ENCODE measurements at regions of chr19 and their contacts with region 1.

Region 1: GRCh38 chr19:54448774-54449700 is at the start of gene LENG8:
- DNase-seq: peak; percentile 98 to 99 (median 99)
- H3K4me3 ChIP-seq: peak within 1 kb of the TSS; percentile 89 to 97 (median 93)
- H3K27ac ChIP-seq: peak within 1 kb of the TSS; percentile 90 to 95
- H3K4me1 ChIP-seq: peaks cover 15 to 37% (median 24%) of the 10 kb centered on the region in 4 experiments
- H3K27me3 ChIP-seq: no peaks in the 10 kb centered on the region

Region 2: DNA sequence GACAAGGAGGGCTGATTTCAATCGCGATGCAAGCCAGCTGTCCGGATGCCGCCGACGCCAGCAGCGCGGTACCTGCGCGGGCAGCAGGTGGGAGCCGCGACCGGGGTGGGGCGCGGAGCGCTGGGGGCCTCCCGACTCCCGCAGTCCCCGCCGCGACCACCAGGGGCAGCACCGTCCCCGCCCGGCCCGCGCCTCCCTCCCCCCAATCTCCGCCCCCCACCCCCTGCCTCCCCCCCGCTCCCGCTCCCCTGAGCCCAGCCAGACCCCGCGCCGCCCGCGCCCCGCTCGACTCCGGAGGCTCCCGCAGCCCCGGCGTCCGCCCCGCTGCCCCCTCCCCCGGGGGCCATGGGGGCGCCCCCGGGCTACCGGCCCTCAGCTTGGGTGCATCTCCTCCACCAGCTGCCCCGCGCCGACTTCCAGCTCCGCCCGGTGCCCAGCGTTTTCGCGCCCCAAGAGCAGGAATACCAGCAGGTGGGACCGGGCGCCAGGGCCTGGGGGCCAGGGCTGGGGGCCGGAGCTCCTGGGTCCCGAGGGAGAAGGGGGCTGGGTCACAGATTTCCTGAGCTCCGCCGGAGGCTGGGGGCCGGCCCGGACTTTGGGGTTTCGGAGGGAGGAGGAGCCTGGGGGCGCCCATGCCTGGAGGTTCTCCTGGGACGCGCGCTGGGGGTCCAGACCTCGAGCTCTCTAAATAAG is 33.7 kb before region 1 on chr19 and contains the start of gene TTYH1:
- CTCF ChIA-PET with region 1: interaction called, 11 read pairs
- POLR2A ChIA-PET with region 1: interaction called, 3 read pairs
- DNase-seq: peak in 2 of 3 donors; percentile 44 to 48
- H3K4me3 ChIP-seq: peak within 1 kb of the TSS in 5 of 7 experiments; percentile 26 to 63 (median 37)
- H3K27ac ChIP-seq: no peak within 1 kb of the TSS
- H3K4me1 ChIP-seq: peaks cover 0 to 44% (median 34%) of the 10 kb centered on the region in 4 experiments
- H3K27me3 ChIP-seq: peaks cover 0 to 46% (median 14%) of the 10 kb centered on the region in 5 experiments

Region 3: GRCh38 chr19:54463531-54464043 is 14.6 kb after region 1 on chr19 and contains the start of gene LENG9:
- CTCF ChIA-PET with region 1: interaction called, 10 read pairs
- POLR2A ChIA-PET with region 1: interaction called, 10 read pairs
- DNase-seq: peak; percentile 99
- H3K4me3 ChIP-seq: peak within 1 kb of the TSS; percentile 53 to 91 (median 76)
- H3K27ac ChIP-seq: peak within 1 kb of the TSS; percentile 33 to 66
- H3K4me1 ChIP-seq: peaks cover 0 to 51% (median 38%) of the 10 kb centered on the region in 4 experiments
- H3K27me3 ChIP-seq: peaks cover 0 to 5% (median 0%) of the 10 kb centered on the region in 5 experiments

Measured in common myeloid progenitor, CD34-positive (primary cell).